HAP-1 (cell line): ENCODE measurements at regions of chr6 and their contacts with region 1.

Region 1: DNA sequence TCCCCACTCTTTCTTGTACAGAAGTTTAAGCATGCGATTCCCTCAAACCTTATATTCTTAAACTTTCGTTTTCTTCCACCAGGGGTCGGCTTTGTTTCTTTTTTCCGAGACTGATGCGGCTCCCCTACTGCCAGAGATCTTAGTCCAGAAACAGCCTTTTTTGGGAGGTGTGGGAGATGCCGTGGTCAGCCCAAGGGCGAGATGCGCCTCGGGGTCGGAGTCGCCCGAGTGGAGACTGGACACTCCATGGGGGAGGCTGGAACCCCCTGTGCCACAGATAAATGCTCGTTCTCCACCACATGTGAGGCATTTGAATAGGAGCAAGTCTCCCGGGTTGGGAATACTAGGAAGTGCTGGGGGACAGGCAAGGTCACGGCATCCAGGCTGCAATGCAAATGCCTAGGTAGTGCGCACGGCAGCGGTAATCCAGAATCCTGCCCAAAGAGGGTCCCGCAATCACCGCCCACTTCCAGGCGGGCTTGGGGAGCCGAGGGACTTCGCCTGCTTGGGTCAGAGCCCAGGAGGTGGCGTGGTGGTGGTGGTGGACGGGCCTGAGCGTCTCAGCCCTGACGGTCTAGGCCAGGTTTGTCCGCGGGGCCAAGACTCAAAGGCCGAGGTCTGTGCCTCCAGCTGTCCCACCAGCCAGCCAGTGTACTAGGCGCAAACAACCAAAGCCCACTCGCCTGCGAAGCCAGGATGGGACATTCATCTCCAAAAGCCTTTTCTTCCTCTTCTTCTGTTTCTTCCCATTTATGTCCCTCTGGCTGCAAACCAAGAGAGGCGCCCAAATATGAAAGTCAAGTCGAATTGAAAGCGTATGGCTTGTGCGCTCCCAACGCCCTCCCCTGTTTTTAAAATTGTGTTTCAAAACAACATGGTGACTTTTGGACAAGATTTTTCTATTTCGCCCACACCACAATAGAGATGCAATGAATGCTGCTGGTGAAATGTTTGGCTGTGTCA is 39.3 kb upstream of the OSTM1 start:
- DNase-seq: peak; percentile 68 to 69
- H3K4me3 ChIP-seq: no peak overlapping the region
- H3K4me1 ChIP-seq: no peaks in the 10 kb centered on the region; the same call in 1 of the 2 replicates
- H3K27me3 ChIP-seq: no peaks in the 10 kb centered on the region

Region 2: DNA sequence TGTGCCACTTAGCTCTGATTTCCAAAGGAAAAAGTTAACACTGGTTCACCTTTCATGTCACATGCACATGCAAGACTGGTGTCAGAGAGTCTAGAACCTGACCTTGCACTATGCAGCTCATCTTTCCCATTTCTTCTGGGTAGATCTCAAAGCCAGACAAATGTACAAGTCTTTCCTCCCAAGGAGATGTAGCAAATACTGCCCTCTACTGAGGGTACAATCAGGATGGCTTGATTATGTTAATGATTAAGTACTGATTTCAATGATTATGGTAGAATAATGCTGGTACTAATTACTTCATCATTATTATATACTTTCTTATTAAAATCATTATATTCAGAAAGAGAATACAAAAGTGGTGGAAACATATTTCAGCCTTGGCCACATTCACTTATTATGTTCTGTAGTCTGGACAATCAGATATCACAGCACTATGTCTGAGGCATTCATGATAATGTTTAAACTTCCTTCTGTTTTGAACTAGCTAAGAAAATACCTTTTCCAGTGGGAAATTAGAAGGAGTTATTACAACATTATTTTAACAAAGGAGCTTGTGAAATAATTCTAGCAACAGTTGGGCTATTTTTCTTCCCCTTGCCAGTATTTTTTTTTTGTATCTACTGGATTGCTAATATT is 378.4 kb after region 1 on chr6:
- in situ Hi-C with region 1: loop called (anchors 10 kb)
- DNase-seq: peak; percentile 14 to 55
- H3K4me3 ChIP-seq: no peak overlapping the region
- H3K4me1 ChIP-seq: peaks cover 2% of the 10 kb centered on the region; the same call in 1 of the 2 replicates
- H3K27me3 ChIP-seq: no peaks in the 10 kb centered on the region

Region 3: DNA sequence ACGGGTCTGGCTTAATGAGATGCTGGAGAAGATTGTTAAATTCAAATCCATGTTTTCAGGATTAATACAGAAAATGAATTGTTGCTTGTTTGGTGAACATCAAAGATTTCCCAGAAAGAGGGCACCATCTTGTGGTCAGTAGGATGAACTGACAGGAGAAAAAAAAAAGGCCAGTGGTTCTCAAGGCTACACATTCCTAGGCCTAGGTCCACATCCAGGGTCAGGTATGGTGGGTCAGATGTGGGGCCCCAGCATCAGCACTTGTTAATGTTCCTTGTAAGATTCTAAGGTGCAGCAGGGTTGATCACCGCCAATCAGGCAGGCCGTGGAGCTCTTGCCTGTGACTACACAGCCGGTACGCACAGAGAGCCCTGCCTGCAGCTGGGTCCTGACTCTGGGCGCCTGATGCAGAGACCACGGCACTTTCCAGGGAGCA is 412.9 kb after region 1 on chr6:
- in situ Hi-C with region 1: loop called (anchors 5 kb)
- DNase-seq: peak in 1 of 2 experiments; percentile 68
- H3K4me3 ChIP-seq: no peak overlapping the region
- H3K4me1 ChIP-seq: no peaks in the 10 kb centered on the region
- H3K27me3 ChIP-seq: no peaks in the 10 kb centered on the region

Region 4: DNA sequence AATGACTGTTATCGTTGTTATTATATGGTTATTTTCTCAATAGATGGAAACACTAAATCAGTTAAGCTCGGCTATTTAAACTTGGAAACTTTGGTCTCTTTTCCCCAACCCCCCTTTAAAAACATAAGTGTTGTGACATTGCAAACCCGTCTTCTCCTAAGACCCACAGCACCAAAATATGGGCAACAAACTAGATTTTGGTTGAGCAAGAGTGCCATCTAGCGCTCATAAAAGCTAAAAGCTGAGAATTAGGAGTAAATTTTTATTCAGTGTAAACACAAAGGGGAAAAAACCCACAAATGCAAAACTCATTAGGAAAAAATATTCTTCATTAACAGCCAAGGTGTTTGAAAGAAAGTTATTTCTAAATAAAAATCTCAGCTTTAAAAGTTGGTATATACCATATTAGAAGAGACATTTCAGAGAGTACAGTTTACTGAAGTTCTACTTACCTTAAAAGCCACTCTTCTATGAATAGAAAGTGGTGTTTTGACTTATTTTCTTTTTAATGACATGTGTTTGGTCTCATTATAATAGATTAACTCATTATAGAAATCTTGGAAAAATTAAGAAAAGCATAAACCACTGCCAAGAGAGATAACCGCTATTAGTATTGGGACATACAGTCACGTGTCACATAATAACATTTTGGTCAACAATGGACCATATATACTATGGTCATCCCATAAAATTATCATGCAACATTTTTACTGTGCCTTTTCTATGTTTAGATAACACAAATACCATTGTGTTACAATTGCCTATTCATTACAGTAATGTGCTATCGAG is 959.7 kb after region 1 on chr6:
- in situ Hi-C with region 1: loop called (anchors 25 kb)
- DNase-seq: peak; percentile 60 to 63
- H3K4me3 ChIP-seq: no peak overlapping the region
- H3K4me1 ChIP-seq: peaks cover 3% of the 10 kb centered on the region
- H3K27me3 ChIP-seq: no peaks in the 10 kb centered on the region